GM12878 (cell line): ENCODE measurements at regions of chr7 and their contacts with region 1.

Region 1: GRCh38 chr7:44565097-44565794 is 8.5 kb downstream of the DDX56 start:
- DNase-seq: no peak
- ATAC-seq: peak; percentile 95
- H3K4me3 ChIP-seq: no peak overlapping the region
- H3K27ac ChIP-seq: no peak overlapping the region
- H3K4me1 ChIP-seq: no peaks in the 10 kb centered on the region
- H3K27me3 ChIP-seq: no peaks in the 10 kb centered on the region
- CTCF ChIP-seq: peak; percentile 94 to 97 (median 97); a peak in 5 of 6 replicates
- EP300 ChIP-seq: no peak
- POLR2A ChIP-seq: no peak
- RAD21 ChIP-seq: peak; percentile 62

Region 2: DNA sequence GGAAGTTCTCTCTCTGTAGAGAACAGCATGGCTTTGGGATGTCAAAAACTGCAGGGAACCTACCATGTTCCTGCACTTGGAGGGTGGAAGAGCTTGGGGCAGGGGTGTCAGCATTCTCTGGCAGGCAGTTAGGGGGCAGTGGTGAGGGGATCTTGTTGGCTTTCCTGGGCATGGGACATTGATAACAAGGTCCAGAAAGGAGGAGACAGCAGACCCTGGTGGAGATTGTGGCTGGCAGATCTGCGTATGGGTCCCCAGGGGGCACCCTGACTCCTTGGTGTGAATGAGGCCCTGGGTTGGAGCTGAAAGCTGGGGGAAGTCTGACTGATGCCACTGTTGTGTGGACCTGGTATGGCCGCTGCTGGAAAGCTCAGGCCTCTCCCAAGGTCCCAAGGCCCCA is 216.9 kb before region 1 on chr7:
- CTCF ChIA-PET with region 1: interaction called, 21 read pairs
- POLR2A ChIA-PET with region 1: no interaction called
- RAD21 ChIA-PET with region 1: interaction called, 11 read pairs
- SMC1A ChIA-PET with region 1: interaction called, 14 read pairs
- in situ Hi-C with region 1: no loop called
- intact Hi-C with region 1: loop called (anchors 1 kb)
- DNase-seq: no peak
- ATAC-seq: peak; percentile 84
- H3K4me3 ChIP-seq: no peak overlapping the region
- H3K27ac ChIP-seq: no peak overlapping the region
- H3K4me1 ChIP-seq: no peaks in the 10 kb centered on the region
- H3K27me3 ChIP-seq: no peaks in the 10 kb centered on the region
- CTCF ChIP-seq: peak; percentile 42 to 54 (median 52)
- EP300 ChIP-seq: no peak
- POLR2A ChIP-seq: no peak
- RAD21 ChIP-seq: peak; percentile 60

Region 3: GRCh38 chr7:44490351-44491200 is 74.7 kb before region 1 on chr7 and contains the start of gene NUDCD3:
- CTCF ChIA-PET with region 1: interaction called, 17 read pairs
- POLR2A ChIA-PET with region 1: no interaction called
- RAD21 ChIA-PET with region 1: interaction called, 6 read pairs
- SMC1A ChIA-PET with region 1: no interaction called
- in situ Hi-C with region 1: no loop called
- intact Hi-C with region 1: no loop called
- DNase-seq: peak; percentile 48
- ATAC-seq: peak; percentile 97
- H3K4me3 ChIP-seq: peak within 1 kb of the TSS; percentile 98
- H3K27ac ChIP-seq: peak within 1 kb of the TSS; percentile 87
- H3K4me1 ChIP-seq: no peaks in the 10 kb centered on the region
- H3K27me3 ChIP-seq: no peaks in the 10 kb centered on the region
- CTCF ChIP-seq: 0 out of 6 replicates have a peak, but pooled peaks of 1 of the 3 experiments have one; percentile 3
- EP300 ChIP-seq: no peak
- POLR2A ChIP-seq: peak; percentile 92
- RAD21 ChIP-seq: no peak
- polyA plus RNA-seq, gene NUDCD3: 25.0 to 30.7 TPM

Region 4: GRCh38 chr7:44534501-44534900 is 30.7 kb before region 1 on chr7:
- CTCF ChIA-PET with region 1: interaction called, 28 read pairs
- POLR2A ChIA-PET with region 1: no interaction called
- RAD21 ChIA-PET with region 1: interaction called, 4 read pairs
- SMC1A ChIA-PET with region 1: interaction called, 3 read pairs
- in situ Hi-C with region 1: no loop called
- intact Hi-C with region 1: no loop called
- DNase-seq: no peak
- ATAC-seq: peak; percentile 94
- H3K4me3 ChIP-seq: no peak overlapping the region
- H3K27ac ChIP-seq: no peak overlapping the region
- H3K4me1 ChIP-seq: no peaks in the 10 kb centered on the region
- H3K27me3 ChIP-seq: no peaks in the 10 kb centered on the region
- CTCF ChIP-seq: peak; percentile 61 to 89 (median 78)
- EP300 ChIP-seq: no peak
- POLR2A ChIP-seq: no peak
- RAD21 ChIP-seq: peak; percentile 43

Region 5: DNA sequence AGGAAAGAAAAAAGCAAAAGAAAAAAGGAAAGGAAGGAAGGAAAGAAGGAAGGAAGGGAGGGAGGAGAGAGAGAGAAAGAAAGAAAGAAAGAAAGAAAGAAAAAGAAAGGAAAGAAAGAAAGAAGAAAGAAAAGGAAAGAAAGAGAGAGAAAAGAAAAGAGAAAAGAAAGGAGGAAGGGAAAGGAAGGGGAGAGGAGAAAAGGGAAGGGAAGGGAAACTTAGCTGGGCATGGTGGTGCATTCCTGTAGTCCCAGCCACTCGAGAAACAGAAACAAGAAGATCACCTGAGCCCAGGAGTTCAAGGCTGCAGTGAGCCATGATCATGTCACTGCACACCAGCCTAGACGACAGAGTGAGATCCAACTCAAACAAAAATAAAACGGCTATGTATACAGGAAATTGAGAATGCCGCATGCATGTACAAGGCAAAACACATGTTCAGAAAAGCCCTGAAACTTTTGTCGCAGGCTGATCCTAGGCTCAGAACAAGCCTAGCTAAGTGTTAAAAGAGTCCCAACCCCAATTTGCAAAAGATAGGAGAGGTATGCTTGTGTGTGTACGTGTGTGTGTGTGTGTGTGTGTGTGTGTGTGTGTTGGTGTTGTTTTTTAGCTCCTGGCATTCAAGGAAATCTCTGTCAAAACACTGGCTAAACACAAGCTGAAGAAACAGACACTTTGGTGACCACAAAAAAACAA is 17.6 kb before region 1 on chr7:
- CTCF ChIA-PET with region 1: interaction called, 10 read pairs
- POLR2A ChIA-PET with region 1: no interaction called
- RAD21 ChIA-PET with region 1: interaction called, 4 read pairs
- SMC1A ChIA-PET with region 1: no interaction called
- in situ Hi-C with region 1: no loop called
- intact Hi-C with region 1: no loop called
- DNase-seq: no peak
- ATAC-seq: no peak
- H3K4me3 ChIP-seq: no peak overlapping the region
- H3K27ac ChIP-seq: no peak overlapping the region
- H3K4me1 ChIP-seq: no peaks in the 10 kb centered on the region
- H3K27me3 ChIP-seq: no peaks in the 10 kb centered on the region; a peak in 2 of 4 replicates
- CTCF ChIP-seq: no peak
- EP300 ChIP-seq: no peak
- POLR2A ChIP-seq: no peak
- RAD21 ChIP-seq: no peak

Region 6: DNA sequence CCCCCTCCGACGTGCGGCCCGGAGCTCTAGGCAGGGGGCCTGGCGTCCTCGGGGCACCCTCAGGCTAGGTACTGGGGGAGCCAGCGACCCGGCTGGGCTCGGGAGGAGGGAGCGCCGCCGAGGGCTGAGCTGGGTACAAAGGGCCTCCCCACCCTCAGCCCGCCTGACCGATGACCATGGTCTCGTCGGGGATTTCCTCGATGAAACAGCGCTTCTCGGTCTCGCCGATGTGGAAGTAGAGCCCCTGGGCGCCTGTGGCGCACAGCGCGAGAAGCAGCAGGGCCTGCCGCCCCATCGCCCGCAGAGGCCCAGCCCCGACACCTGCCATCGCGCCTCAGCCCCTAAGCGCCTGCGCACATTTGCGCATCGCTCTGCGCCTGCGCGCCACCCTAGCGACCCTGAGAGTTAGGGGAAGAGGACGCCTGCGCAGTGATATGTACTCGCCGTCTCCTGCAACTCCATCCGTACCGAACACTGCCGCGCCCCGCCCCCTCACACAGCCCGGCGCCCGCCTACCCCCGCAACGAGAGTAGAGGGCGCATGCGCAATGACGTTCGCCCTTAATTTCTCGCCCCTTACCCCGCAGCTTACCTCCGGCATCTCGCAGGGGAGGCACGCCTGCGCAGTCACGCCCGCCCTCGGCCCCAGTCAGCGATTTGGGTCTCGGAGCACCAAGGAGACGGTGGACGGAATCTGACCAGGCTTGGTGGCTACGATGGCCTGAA is 16.8 kb after region 1 on chr7 and contains the start of gene TMED4:
- CTCF ChIA-PET with region 1: interaction called, 16 read pairs
- POLR2A ChIA-PET with region 1: interaction called, 3 read pairs
- RAD21 ChIA-PET with region 1: no interaction called
- SMC1A ChIA-PET with region 1: interaction called, 4 read pairs
- in situ Hi-C with region 1: no loop called
- intact Hi-C with region 1: no loop called
- DNase-seq: peak; percentile 97
- ATAC-seq: peak; percentile 92
- H3K4me3 ChIP-seq: peak within 1 kb of the TSS; percentile 83
- H3K27ac ChIP-seq: peak within 1 kb of the TSS; percentile 86
- H3K4me1 ChIP-seq: peaks cover 4% of the 10 kb centered on the region; the same call in 1 of the 2 replicates
- H3K27me3 ChIP-seq: no peaks in the 10 kb centered on the region
- CTCF ChIP-seq: no peak
- EP300 ChIP-seq: no peak
- POLR2A ChIP-seq: peak; percentile 98
- RAD21 ChIP-seq: no peak
- polyA plus RNA-seq, gene TMED4: 20.8 to 21.0 TPM

Region 7: DNA sequence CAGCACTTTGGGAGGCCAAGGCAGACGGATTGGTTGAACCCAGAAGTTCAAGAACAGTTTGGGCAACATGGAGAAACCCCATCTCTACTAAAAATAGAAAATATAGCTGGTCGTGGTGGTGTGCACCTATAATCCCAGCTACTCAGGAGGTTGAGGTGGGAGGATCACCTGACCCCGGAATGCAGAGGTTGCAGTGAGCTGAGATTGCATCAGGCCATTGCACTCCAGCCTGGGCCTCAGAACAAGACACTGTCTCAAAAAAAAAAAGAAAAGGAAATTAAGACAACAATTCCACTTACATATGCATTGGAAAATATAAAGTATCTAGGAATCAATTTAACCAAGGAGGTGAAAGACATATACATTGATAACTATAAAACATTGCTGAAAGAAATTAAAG is 34.0 kb after region 1 on chr7:
- CTCF ChIA-PET with region 1: no interaction called
- POLR2A ChIA-PET with region 1: no interaction called
- RAD21 ChIA-PET with region 1: no interaction called
- SMC1A ChIA-PET with region 1: no interaction called
- in situ Hi-C with region 1: no loop called
- intact Hi-C with region 1: no loop called
- DNase-seq: no peak
- ATAC-seq: no peak
- H3K4me3 ChIP-seq: no peak overlapping the region
- H3K27ac ChIP-seq: no peak overlapping the region
- H3K4me1 ChIP-seq: peaks cover 13% of the 10 kb centered on the region
- H3K27me3 ChIP-seq: no peaks in the 10 kb centered on the region
- CTCF ChIP-seq: no peak
- EP300 ChIP-seq: no peak
- POLR2A ChIP-seq: no peak
- RAD21 ChIP-seq: no peak

Region 8: GRCh38 chr7:44720301-44720700 is 155.1 kb after region 1 on chr7:
- CTCF ChIA-PET with region 1: no interaction called
- POLR2A ChIA-PET with region 1: no interaction called
- RAD21 ChIA-PET with region 1: no interaction called
- SMC1A ChIA-PET with region 1: no interaction called
- in situ Hi-C with region 1: no loop called
- intact Hi-C with region 1: no loop called
- DNase-seq: no peak
- ATAC-seq: no peak
- H3K4me3 ChIP-seq: no peak overlapping the region
- H3K27ac ChIP-seq: no peak overlapping the region
- H3K4me1 ChIP-seq: no peaks in the 10 kb centered on the region
- H3K27me3 ChIP-seq: no peaks in the 10 kb centered on the region
- CTCF ChIP-seq: no peak
- EP300 ChIP-seq: no peak
- POLR2A ChIP-seq: no peak
- RAD21 ChIP-seq: no peak